CD8-positive, alpha-beta memory T cell (primary cell): ENCODE measurements at regions of chr15 and their contacts with region 1.

Region 1: GRCh38 chr15:78422571-78423340 is 15.3 kb upstream of the IREB2 start:
- DNase-seq: peak; percentile 39 to 68 (median 49)
- H3K4me3 ChIP-seq: no peak overlapping the region
- H3K4me3 Mint-ChIP-seq: peak overlapping the region in 1 of 7 donors; percentile 20
- H3K27ac ChIP-seq: no peak overlapping the region
- H3K27ac Mint-ChIP-seq: peak overlapping the region in 1 of 8 donors; percentile 40
- H3K4me1 ChIP-seq: no peaks in the 10 kb centered on the region
- H3K4me1 Mint-ChIP-seq: peaks cover 5 to 18% (median 18%) of the 10 kb centered on the region in 3 donors
- H3K27me3 ChIP-seq: no peaks in the 10 kb centered on the region
- H3K27me3 Mint-ChIP-seq: peaks cover 8 to 17% of the 10 kb centered on the region in 2 donors

Region 2: GRCh38 chr15:77942611-77943211 is 480.0 kb before region 1 on chr15:
- CTCF ChIA-PET with region 1: no interaction called
- POLR2A ChIA-PET with region 1: no interaction called
- DNase-seq: no peak
- H3K4me3 ChIP-seq: no peak overlapping the region
- H3K4me3 Mint-ChIP-seq: peak overlapping the region in 1 of 7 donors; percentile 49
- H3K27ac ChIP-seq: no peak overlapping the region
- H3K27ac Mint-ChIP-seq: peak overlapping the region in 2 of 8 donors; percentile 36 to 73
- H3K4me1 ChIP-seq: no peaks in the 10 kb centered on the region
- H3K4me1 Mint-ChIP-seq: peaks cover 0 to 15% (median 0%) of the 10 kb centered on the region in 3 donors
- H3K27me3 ChIP-seq: no peaks in the 10 kb centered on the region
- H3K27me3 Mint-ChIP-seq: peaks cover 8 to 12% of the 10 kb centered on the region in 2 donors

Region 3: DNA sequence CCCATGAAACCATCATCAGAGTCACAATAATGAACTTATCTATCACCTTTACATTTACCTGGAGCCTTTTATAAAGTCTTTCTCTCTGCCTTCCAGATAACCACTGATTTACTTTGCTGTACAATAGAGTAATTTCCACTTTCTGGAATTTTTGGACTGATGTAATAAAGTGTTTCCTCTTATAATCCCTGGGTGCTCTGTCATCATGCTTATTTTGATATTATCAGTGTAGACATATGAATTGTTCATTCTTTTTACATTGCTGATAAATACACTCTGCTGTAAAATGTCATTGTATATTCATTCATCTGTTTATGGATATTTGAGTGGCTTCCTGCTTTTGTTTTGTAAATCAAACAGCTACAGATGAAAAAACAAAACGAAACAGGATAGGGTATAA is 11.7 kb before region 1 on chr15:
- CTCF ChIA-PET with region 1: interaction called, 11 read pairs
- POLR2A ChIA-PET with region 1: no interaction called
- DNase-seq: no peak
- H3K4me3 ChIP-seq: no peak overlapping the region
- H3K4me3 Mint-ChIP-seq: no peak overlapping the region
- H3K27ac ChIP-seq: no peak overlapping the region
- H3K27ac Mint-ChIP-seq: no peak overlapping the region
- H3K4me1 ChIP-seq: no peaks in the 10 kb centered on the region
- H3K4me1 Mint-ChIP-seq: no peaks in the 10 kb centered on the region
- H3K27me3 ChIP-seq: peaks cover 3% of the 10 kb centered on the region
- H3K27me3 Mint-ChIP-seq: peaks cover 6 to 25% of the 10 kb centered on the region in 2 donors

Region 4: GRCh38 chr15:78445875-78446274 is 23.1 kb after region 1 on chr15:
- CTCF ChIA-PET with region 1: no interaction called
- POLR2A ChIA-PET with region 1: no interaction called
- DNase-seq: no peak
- H3K4me3 ChIP-seq: no peak overlapping the region
- H3K4me3 Mint-ChIP-seq: peak overlapping the region in 1 of 7 donors; percentile 16
- H3K27ac ChIP-seq: no peak overlapping the region
- H3K27ac Mint-ChIP-seq: peak overlapping the region in 6 of 8 donors; percentile 15 to 77 (median 44)
- H3K4me1 ChIP-seq: peaks cover 30% of the 10 kb centered on the region
- H3K4me1 Mint-ChIP-seq: peaks cover 60 to 90% (median 87%) of the 10 kb centered on the region in 3 donors
- H3K27me3 ChIP-seq: no peaks in the 10 kb centered on the region
- H3K27me3 Mint-ChIP-seq: no peaks in the 10 kb centered on the region